Heart right ventricle (tissue), 16 donors: ENCODE measurements at regions of chr4 and their contacts with region 1.

Region 1: DNA sequence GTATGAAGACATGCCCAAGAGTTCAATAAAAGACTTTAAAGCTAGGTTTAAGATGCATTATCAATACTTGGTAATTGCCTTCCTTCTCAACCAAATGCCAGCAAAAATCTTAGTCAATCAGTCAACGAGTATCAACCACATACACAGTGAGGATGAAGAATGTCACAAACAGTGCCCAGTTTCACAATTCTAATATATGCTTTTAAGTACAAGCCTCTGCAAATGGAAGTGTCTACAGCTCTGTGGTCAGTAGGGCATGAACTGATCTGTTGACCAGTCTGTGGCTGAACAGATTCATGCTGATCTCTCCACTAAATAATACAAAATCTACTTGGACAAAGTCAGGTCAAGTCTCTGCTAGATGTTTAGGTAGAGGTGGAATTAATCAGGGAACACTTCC is 27.9 kb downstream of the PPARGC1A start:
- DNase-seq: no peak
- ATAC-seq: no peak
- H3K4me3 ChIP-seq: no peak overlapping the region
- H3K27ac ChIP-seq: peak overlapping the region in 3 of 10 donors; percentile 2 to 46 (median 19)
- H3K4me1 ChIP-seq: peaks cover 0 to 70% (median 15%) of the 10 kb centered on the region in 9 donors
- H3K27me3 ChIP-seq: no peaks in the 10 kb centered on the region
- CTCF ChIP-seq: no peak

Region 2: DNA sequence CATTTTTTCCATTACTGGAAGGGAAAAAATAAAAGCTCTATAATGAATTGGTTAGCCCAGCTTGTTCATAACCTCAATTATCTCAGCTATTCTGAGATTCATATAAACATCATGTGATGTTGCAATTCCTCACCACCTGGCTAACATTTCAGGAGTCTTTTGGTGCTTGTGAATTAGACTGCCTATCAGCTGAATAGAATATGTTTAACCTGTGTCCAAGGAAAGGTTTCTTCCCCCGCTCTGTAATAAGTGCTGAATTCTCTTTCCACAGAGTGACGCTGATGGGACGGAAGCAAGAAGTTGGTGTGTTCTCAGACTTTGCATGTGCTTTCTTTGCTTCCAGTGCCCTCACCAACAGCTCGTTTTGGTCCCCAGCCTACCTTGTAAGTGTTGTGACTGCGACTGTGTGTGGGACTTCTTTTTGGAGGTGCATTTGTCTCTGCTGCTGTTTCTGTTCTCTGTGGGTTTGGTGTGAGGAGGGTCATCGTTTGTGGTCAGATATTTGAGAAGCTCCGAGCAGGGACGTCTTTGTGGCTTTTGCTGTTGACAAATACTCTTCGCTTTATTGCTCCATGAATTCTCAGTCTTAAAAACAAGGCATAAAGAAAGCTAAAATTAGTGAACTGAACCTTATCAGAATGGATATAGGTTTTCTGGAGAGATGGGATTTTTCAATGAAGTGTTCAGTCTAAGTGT is 33.7 kb before region 1 on chr4:
- intact Hi-C with region 1: loop called in 1 of 10 experiments (anchors 1 kb)
- DNase-seq: no peak
- ATAC-seq: peak in 2 of 8 donors; percentile 17 to 39
- H3K4me3 ChIP-seq: no peak overlapping the region
- H3K27ac ChIP-seq: peak overlapping the region in 2 of 10 donors; percentile 7 to 49
- H3K4me1 ChIP-seq: peaks cover 0 to 21% (median 0%) of the 10 kb centered on the region in 9 donors
- H3K27me3 ChIP-seq: no peaks in the 10 kb centered on the region
- CTCF ChIP-seq: no peak

Region 3: DNA sequence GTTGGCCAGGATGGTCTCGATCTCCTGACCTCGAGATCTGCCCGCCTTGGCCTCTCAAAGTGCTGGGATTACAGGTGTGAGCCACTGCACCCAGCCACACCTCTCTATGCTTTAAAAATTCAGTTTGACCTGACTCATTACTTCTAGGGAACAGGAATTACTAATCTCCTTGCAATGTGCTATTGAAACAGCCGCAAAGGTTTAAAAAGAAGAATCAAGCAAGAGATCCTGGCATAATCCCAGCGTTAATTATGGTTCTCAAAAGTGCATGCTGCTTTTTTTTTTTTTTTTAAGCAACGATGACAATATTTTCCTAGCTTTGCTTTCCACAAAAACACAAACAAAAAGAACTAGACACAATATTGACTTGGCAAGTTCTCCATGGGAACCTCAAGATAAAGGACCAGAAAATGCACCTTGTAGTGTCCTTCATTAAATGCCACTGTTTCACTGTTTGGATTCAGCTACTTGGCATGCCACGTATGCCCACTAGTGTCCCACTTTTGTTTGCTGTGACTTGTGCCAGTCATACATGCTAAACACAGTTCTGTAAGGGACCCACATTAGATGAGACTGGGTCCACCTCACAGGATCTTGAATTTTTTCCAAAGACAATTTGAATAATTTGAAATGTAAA is 140.6 kb after region 1 on chr4:
- intact Hi-C with region 1: no loop called
- DNase-seq: no peak
- ATAC-seq: no peak
- H3K4me3 ChIP-seq: no peak overlapping the region
- H3K27ac ChIP-seq: no peak overlapping the region
- H3K4me1 ChIP-seq: no peaks in the 10 kb centered on the region
- H3K27me3 ChIP-seq: no peaks in the 10 kb centered on the region
- CTCF ChIP-seq: no peak